Activated naive CD4-positive, alpha-beta T cell treated with anti-CD3 and anti-CD28 coated beads for 36 hours (primary cell): ENCODE measurements at regions of chr6 and their contacts with region 1.

Region 1: DNA sequence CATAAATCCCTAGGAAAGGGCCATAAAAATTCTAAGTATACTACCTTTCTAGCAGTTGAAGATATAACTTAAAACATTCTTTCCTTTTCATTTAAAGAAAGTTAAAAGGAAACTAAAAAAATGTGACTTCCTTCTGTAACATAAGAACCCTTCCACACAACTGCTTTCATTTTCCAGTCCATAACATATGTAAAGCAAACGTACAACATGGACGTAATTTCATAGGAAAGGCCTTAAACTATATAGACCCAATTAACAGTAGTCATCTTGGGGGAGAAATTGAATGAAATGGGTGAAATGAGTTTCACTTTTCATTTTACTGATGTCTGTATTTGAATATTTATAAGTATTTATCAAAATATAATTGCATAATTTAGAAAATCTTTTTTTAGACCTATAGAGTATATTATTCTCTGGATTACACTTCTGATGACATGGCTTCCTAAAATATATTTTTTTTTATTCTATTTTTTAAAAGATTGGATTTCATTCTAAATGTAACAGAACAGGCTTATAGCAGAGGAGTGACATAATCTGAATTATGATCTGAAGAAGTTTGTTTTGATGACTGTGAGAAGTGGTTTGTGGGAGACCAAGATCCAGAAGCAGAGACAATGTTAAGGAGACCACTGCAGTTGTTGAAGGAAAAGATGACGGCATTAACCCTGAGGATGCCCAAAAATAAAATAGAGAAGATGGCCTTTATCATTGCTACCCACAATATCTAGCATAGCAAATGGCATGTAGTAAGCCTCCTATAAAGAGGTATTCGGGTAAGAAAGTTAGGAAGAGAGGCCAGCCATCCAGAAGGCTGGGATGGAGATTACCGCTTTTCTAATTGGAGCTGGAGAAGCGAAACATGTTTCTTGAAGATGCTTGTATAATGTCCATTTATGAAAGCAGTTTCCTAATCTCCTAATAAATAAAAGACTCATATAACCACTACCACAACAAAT is 260.4 kb downstream of the PTPRK start:
- DNase-seq: no peak
- H3K4me3 Mint-ChIP-seq: peak overlapping the region; percentile 60
- H3K27ac Mint-ChIP-seq: peak overlapping the region; percentile 46
- H3K4me1 Mint-ChIP-seq: peaks cover 22% of the 10 kb centered on the region
- H3K27me3 Mint-ChIP-seq: no peaks in the 10 kb centered on the region

Region 2: DNA sequence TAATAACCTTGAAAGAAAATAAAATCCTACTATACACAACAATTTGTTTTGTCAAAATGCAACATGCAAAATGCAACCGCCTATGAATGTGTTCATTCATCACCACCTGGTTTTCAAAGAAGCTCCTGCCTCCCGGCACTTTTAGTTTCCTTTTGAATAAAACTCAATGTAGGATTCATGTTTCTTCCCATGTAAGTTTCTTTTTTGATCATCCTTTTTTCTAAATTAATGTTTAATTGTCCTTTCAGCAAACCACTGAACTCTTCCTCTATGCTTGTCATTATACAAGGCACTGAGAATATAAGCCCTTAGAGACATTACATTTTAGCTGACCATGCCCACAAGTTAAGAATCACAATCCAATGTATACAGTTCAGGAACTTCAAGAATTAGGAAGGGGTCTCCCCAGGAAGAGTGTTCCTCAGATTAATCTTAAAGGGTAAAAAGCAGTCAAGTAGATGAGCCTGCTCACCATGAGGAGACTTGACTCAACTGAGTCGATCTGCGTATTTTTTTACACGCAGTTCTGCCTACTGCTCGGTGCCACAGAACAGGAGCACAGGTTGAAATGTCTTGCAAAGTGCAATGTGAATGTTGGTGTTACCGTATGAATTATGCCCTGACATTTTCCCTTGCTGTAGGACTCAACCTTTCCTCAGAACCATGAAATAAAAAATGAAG is 351.9 kb before region 1 on chr6:
- CTCF ChIA-PET with region 1: no interaction called
- intact Hi-C with region 1: loop called (anchors 5 kb)
- DNase-seq: peak; percentile 60
- H3K4me3 Mint-ChIP-seq: peak overlapping the region; percentile 51
- H3K27ac Mint-ChIP-seq: peak overlapping the region; percentile 77
- H3K4me1 Mint-ChIP-seq: peaks cover 42% of the 10 kb centered on the region
- H3K27me3 Mint-ChIP-seq: no peaks in the 10 kb centered on the region

Region 3: GRCh38 chr6:128275030-128275429 is 15.0 kb after region 1 on chr6:
- CTCF ChIA-PET with region 1: no interaction called
- intact Hi-C with region 1: loop called (anchors 1 kb)
- DNase-seq: no peak
- H3K4me3 Mint-ChIP-seq: no peak overlapping the region
- H3K27ac Mint-ChIP-seq: no peak overlapping the region
- H3K4me1 Mint-ChIP-seq: peaks cover 8% of the 10 kb centered on the region
- H3K27me3 Mint-ChIP-seq: no peaks in the 10 kb centered on the region

Region 4: GRCh38 chr6:129454488-129454887 is 1194.5 kb after region 1 on chr6:
- CTCF ChIA-PET with region 1: no interaction called
- intact Hi-C with region 1: loop called (anchors 10 kb)
- DNase-seq: no peak
- H3K4me3 Mint-ChIP-seq: no peak overlapping the region
- H3K27ac Mint-ChIP-seq: no peak overlapping the region
- H3K4me1 Mint-ChIP-seq: peaks cover 50% of the 10 kb centered on the region
- H3K27me3 Mint-ChIP-seq: no peaks in the 10 kb centered on the region